ENCODE measurements at regions of chr2 and their contacts with region 1.

Region 1: GRCh38 chr2:105744091-105744908 is 412 bp upstream of the NCK2 start:
- DNase-seq: peak; percentile 90
- ATAC-seq: peak; percentile 93

Region 2: GRCh38 chr2:105576440-105577252 is 167.7 kb before region 1 on chr2:
- intact Hi-C with region 1: loop called (anchors 5 kb)
- DNase-seq: no peak
- ATAC-seq: peak; percentile 33

Region 3: DNA sequence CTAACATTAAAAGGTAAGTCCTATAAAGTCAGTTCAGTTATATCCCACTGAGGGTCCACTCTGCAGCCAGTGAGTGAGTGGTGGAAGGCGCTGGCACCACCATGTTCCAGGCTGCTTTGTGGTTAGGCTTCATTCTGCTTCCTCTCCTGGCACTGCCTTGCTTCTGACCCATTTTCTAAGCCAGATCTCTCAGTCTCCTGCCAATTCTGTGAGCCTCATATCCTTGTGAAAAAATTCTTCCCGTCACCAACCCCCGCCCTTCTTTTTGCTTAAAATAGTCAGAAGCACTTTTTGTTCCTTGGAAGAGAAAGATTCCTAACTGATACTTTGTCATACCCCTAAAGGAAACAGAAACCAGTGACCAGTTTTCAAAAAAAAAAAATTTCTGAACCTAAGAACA is 139.4 kb before region 1 on chr2:
- intact Hi-C with region 1: loop called (anchors 10 kb)
- DNase-seq: no peak
- ATAC-seq: peak; percentile 85

Region 4: GRCh38 chr2:105652014-105652796 is 92.1 kb before region 1 on chr2:
- intact Hi-C with region 1: no loop called
- DNase-seq: no peak
- ATAC-seq: no peak

Region 5: DNA sequence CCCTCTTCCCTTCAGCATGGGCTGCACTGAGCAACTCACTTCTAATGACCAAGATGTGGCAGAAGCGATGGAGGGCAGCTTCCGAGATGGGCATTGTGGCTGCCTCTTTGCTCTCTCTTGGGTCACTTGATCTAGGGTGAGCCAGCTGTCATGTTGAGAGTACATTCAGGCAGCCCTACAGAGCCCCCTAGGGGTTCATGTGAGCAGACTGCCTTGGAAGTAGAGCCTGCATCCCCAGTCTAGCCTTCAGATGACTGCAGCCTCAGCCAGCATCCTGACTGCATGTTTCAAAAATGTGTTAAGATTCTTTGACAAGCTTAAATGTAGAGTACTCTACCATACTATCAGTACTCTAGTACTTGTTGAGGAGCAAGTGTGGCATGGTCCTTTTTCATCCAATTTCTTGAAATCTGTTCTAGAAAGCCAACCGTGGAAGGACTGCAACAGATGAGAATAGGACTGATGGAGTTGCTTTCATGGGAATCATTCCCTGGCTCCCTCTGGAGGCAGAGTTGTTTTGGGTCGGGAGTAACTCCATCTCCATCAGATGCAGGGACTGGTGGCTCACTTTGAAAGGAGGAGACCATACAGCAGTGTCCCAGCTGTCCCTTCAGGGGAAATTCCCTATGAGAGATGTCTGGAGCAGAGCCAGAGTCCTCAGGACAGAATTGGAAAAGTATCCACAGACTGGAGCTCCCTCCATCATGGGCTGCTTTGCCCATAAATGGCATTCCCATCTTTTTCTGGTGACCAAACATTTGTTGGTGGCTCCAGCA is 144.5 kb after region 1 on chr2:
- intact Hi-C with region 1: loop called (anchors 10 kb)
- DNase-seq: no peak
- ATAC-seq: peak; percentile 21

Region 6: DNA sequence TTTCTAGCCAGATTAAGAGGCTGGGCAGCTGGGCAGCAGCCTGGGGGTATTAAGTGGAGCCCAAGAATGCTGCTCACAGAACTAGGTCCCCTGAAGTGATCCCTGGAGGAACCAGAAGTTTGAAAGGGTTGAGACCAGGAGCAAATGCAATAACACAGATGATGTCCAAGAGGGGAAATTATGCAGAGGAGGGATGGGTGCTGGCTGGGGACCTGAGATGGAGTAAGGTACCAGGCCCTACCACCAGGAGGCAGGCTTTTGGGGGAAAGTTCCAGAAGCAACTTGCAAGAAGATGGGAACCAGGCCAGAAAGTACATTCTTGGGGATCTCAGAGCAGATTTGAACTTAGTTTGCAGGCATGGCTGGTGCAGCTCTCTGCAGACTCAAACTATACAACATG is 175.5 kb after region 1 on chr2:
- intact Hi-C with region 1: no loop called
- DNase-seq: no peak
- ATAC-seq: peak; percentile 13